Heart right ventricle (tissue), 16 donors: ENCODE measurements at regions of chr7 and their contacts with region 1.

Region 1: DNA sequence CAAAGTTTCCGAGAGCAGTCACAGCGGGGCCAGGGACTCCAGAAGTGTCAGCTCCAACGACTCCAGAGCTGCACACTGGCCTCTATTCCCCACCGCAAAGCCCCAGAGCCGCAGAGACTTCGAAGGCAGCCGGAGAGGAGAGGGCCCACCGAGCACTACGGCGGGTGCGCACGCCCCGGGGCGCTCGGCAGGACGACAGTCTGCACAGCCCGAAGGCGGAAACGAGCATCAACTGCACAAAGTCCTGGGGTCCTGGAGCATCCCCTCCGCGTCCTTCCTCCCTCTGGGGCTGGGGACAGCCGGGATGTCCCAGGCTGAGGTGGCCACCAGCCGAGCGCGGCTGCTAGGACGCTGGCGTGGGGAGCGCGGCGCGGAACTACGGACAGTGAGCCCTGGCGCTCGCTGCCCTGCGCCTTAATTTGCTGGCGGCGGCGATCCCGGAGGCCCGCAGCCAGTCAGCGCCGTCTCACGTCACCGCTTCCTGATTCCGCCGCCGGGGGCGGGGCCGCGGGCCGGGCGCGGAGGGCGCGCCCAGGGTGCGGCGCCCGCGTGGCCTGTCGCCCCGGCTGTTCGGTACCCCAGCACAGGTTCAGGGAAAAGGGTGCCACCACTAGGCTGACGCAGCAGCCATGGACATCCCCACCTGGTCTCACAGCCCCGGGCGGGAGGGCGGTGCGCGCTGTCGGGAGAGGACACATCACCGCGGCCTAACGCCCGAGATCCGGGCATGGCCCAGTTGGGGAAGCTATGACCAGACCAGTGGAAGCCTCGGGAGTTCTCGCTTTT is at the start of gene TBX20:
- DNase-seq: peak; percentile 69 to 85
- ATAC-seq: peak; percentile 69 to 85 (median 77)
- H3K4me3 ChIP-seq: peak within 1 kb of the TSS; percentile 52 to 86 (median 77)
- H3K27ac ChIP-seq: peak within 1 kb of the TSS; percentile 76 to 96 (median 92)
- H3K4me1 ChIP-seq: peaks cover 0 to 33% (median 16%) of the 10 kb centered on the region in 9 donors
- H3K27me3 ChIP-seq: peaks cover 0 to 100% (median 73%) of the 10 kb centered on the region in 7 donors
- CTCF ChIP-seq: no peak
- total RNA-seq, gene TBX20: 94.6 to 186 (median 114) TPM

Region 2: GRCh38 chr7:35334516-35334915 is 80.6 kb after region 1 on chr7:
- intact Hi-C with region 1: loop called in 1 of 10 experiments (anchors 5 kb)
- DNase-seq: no peak
- ATAC-seq: no peak
- H3K4me3 ChIP-seq: no peak overlapping the region
- H3K27ac ChIP-seq: no peak overlapping the region
- H3K4me1 ChIP-seq: peaks cover 0 to 33% (median 0%) of the 10 kb centered on the region in 9 donors
- H3K27me3 ChIP-seq: no peaks in the 10 kb centered on the region
- CTCF ChIP-seq: no peak

Region 3: DNA sequence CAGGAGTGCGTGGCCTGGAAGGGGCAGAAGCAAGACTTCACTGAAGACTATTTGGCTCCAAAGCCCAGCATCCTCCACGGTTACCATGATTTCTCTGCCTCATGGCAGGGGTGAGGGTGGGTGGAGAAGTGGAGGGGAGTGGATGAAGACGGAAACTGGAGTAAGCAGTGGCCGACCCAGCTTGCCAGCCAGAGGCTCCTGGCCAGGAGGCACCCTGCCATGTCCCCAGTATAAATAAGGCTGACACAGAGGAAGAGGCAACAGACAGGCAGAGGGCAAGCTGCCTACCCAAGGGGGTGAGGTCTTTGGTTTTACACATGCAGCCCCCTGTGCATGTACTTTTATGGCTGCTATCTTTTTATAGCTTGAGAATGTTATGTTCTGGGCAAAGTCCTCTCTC is 102.6 kb after region 1 on chr7:
- intact Hi-C with region 1: no loop called
- DNase-seq: peak in 1 of 2 donors; percentile 51
- ATAC-seq: peak; percentile 46 to 93 (median 82)
- H3K4me3 ChIP-seq: no peak overlapping the region
- H3K27ac ChIP-seq: no peak overlapping the region
- H3K4me1 ChIP-seq: peaks cover 0 to 6% (median 0%) of the 10 kb centered on the region in 9 donors
- H3K27me3 ChIP-seq: no peaks in the 10 kb centered on the region
- CTCF ChIP-seq: no peak

Region 4: DNA sequence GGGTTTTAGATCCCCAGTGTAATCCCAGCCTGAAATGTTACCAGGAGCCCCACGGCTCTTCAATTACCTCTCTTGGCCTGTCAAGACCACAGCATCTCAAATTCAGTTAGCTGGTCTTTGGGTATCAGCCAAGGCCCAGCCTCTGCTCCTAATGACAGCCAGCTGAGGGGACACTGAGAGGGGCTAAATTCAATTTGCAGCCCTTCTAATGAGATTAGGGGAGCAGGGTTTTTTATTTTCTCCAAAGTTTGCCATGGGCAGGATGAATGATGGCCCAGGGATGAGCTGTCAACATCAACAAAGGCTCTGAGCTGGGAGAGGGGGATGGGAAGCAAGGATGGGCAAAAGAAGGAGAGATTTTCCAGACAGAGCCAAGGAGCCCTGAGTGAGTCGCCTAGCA is 116.8 kb after region 1 on chr7:
- intact Hi-C with region 1: no loop called
- DNase-seq: no peak
- ATAC-seq: no peak
- H3K4me3 ChIP-seq: no peak overlapping the region
- H3K27ac ChIP-seq: no peak overlapping the region
- H3K4me1 ChIP-seq: peaks cover 0 to 7% (median 0%) of the 10 kb centered on the region in 9 donors
- H3K27me3 ChIP-seq: no peaks in the 10 kb centered on the region
- CTCF ChIP-seq: no peak

Region 5: DNA sequence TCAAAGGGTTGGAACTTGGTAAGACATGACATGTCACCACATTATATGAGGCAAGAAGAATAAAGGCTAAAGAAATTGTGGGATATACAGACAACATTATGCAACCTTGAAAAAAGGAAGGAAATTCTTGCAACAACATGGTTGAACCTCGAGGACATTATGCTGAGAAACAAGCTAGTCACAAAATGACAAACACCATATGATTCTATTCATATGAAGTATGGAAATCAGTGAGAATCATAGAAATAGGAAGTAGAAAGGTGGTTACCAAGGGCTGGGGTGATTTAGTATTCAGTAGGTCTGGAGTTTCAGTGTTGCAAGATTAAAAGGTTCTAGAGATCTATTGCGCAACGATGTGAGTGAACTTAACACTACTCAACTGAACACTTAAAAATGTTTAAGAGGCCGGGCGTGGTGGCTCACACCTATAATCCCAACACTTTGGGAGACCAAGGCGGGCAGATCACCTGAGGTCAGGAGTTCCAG is 126.9 kb after region 1 on chr7:
- intact Hi-C with region 1: loop called in 2 of 10 experiments (anchors 5 to 10 kb)
- DNase-seq: no peak
- ATAC-seq: peak in 1 of 8 donors; percentile 8
- H3K4me3 ChIP-seq: no peak overlapping the region
- H3K27ac ChIP-seq: no peak overlapping the region
- H3K4me1 ChIP-seq: peaks cover 0 to 12% (median 7%) of the 10 kb centered on the region in 9 donors
- H3K27me3 ChIP-seq: no peaks in the 10 kb centered on the region
- CTCF ChIP-seq: no peak

Region 6: GRCh38 chr7:35415411-35415822 is 161.5 kb after region 1 on chr7:
- intact Hi-C with region 1: loop called in 8 of 10 experiments (anchors 5 to 10 kb)
- DNase-seq: peak; percentile 70 to 80
- ATAC-seq: peak; percentile 79 to 91 (median 83)
- H3K4me3 ChIP-seq: no peak overlapping the region
- H3K27ac ChIP-seq: peak overlapping the region in 7 of 10 donors; percentile 37 to 64 (median 57)
- H3K4me1 ChIP-seq: peaks cover 0 to 67% (median 30%) of the 10 kb centered on the region in 9 donors
- H3K27me3 ChIP-seq: peaks cover 0 to 2% (median 0%) of the 10 kb centered on the region in 7 donors
- CTCF ChIP-seq: no peak

Region 7: DNA sequence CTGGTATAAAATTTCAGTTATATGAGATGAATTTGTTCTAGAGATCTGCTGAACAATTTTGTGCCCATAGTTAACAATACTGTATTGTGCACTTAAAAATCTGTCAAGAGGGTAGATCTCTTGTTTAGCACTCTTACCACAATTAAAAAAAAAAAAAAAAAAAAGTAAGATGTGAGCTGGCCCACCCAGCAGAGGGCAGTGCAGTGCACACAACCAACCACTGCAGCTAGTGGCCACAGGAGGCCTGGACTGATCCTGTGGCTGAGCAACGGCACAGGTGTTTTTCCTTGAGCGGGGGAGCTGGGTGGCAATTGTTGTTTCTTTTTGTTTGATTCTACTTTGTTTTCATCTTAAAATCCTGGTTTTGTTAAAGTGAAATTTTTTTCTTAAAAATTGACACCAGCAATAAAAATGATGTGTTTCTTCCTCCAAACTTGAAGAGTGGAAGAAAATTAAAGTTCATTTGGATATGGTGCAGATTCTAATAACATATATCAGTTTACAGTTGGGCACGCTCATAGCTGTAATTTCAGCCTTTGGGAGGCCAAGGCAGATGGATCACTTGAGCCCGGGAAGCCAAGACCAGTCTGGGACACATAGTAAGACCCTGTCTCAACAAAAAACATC is 171.1 kb after region 1 on chr7:
- intact Hi-C with region 1: loop called in 2 of 10 experiments (anchors 5 kb)
- DNase-seq: peak; percentile 55 to 64
- ATAC-seq: peak; percentile 57 to 78 (median 72)
- H3K4me3 ChIP-seq: no peak overlapping the region
- H3K27ac ChIP-seq: no peak overlapping the region
- H3K4me1 ChIP-seq: peaks cover 0 to 10% (median 0%) of the 10 kb centered on the region in 9 donors
- H3K27me3 ChIP-seq: no peaks in the 10 kb centered on the region
- CTCF ChIP-seq: peak; percentile 58 to 80 (median 76)

Region 8: DNA sequence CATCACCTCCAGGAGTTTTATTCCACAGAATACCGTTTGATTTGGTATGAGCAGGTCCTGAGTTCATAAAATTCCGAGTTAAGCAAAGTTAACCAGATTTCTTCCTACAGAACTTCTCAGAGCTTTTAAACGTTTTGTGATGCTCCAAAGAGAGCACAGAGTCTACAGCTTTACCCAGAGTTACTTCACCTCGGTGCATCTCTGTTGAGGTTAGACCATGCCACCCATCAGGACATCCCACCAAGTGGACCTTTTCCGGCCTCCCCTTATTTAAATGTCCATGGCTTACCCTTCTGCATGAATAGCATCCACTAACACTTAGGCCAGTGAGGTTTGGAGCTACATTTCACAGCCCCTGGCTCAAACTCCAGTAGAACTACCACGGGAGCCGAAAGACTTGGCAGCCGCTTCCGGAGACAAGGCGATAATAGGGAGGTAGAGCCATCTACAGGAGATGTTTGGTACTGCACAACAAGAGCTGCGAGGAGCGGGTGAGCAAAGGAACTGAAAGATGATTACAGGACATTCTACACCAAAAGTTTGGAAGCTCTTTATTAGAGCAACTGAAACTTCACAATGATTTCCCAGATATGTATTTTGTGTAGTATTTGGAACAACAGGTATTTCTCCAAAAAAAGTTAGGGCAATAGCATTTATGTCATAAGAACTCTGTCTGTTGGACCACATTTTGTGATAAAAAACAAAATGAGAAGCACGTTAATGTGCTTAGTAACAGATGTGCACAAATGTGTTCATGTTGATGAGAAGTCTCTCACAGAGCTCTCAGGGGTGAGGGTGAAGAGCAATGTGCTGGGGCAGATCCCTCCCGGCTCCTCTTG is 266.3 kb after region 1 on chr7:
- intact Hi-C with region 1: loop called in 2 of 10 experiments (anchors 5 to 10 kb)
- DNase-seq: peak; percentile 71 to 86
- ATAC-seq: peak; percentile 80 to 91 (median 86)
- H3K4me3 ChIP-seq: no peak overlapping the region
- H3K27ac ChIP-seq: peak overlapping the region in 3 of 10 donors; percentile 40 to 41 (median 40)
- H3K4me1 ChIP-seq: peaks cover 0 to 24% (median 20%) of the 10 kb centered on the region in 9 donors
- H3K27me3 ChIP-seq: peaks cover 0 to 8% (median 0%) of the 10 kb centered on the region in 7 donors
- CTCF ChIP-seq: peak; percentile 69 to 92 (median 88)

Region 9: DNA sequence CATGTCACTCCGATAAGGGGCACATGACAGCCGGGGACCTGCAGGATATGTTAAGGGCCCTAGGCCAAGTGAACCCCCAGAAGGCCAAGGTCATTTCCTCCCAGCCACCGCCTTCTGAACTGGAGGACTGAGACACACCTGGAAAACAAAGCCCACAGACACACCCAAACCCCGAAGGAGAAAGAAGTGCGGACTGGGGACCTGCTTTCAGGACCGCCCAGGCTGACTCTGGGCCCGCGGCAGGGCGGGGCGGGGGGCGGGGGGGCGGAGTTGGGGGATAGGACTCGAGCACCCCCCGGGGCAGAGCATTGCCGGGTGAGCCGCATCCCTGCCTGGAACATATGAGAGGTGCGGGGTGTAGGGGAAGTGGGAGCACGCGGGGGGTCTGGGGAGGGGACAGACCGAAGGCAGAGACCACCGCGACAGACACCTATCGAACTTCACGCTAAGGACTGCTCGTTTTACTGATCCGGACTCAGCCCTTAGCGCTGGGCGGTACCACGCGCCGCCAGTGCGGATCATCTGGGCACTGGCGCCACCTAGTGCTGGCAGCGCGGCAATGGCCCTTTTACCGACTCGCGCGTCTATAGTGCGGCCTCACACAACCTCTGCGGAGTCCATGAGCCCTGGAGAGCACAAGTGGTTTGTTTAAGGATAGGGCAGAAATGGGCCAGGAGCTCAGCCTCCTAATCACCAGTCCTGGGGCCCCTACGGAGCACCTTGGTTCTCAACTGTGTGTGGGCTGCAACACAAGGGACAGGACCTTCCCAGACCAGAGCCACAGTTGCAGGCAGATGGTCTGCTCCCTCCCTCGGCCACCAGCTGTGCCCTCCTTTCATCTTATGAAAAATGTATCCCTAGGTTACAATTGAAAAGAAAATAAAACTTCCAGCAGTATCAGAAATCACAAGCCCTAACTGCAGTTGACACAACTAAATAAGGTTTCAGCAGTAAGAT is 283.4 kb after region 1 on chr7:
- intact Hi-C with region 1: loop called in 1 of 10 experiments (anchors 10 kb)
- DNase-seq: peak; percentile 75 to 84
- ATAC-seq: peak; percentile 96 to 98 (median 97)
- H3K4me3 ChIP-seq: peak overlapping the region in 9 of 10 donors; percentile 33 to 55 (median 51)
- H3K27ac ChIP-seq: no peak overlapping the region
- H3K4me1 ChIP-seq: peaks cover 0 to 12% (median 7%) of the 10 kb centered on the region in 9 donors
- H3K27me3 ChIP-seq: peaks cover 0 to 8% (median 4%) of the 10 kb centered on the region in 7 donors
- CTCF ChIP-seq: peak; percentile 81 to 97 (median 94)

Region 10: GRCh38 chr7:35707422-35707821 is 453.5 kb after region 1 on chr7:
- intact Hi-C with region 1: no loop called
- DNase-seq: no peak
- ATAC-seq: no peak
- H3K4me3 ChIP-seq: no peak overlapping the region
- H3K27ac ChIP-seq: no peak overlapping the region
- H3K4me1 ChIP-seq: peaks cover 0 to 15% (median 8%) of the 10 kb centered on the region in 9 donors
- H3K27me3 ChIP-seq: no peaks in the 10 kb centered on the region
- CTCF ChIP-seq: no peak